PC-3 (cell line): ENCODE measurements at regions of chr11 and their contacts with region 1.

Region 1: GRCh38 chr11:87812571-87813365 is 362.5 kb downstream of the RAB38 start:
- DNase-seq: no peak
- ATAC-seq: no peak
- H3K4me3 ChIP-seq: no peak overlapping the region
- H3K27ac ChIP-seq: no peak overlapping the region
- H3K4me1 ChIP-seq: 0 out of 2 replicates have a peak, but pooled peaks cover 3% of the 10 kb centered on the region
- H3K27me3 ChIP-seq: no peaks in the 10 kb centered on the region
- CTCF ChIP-seq: no peak

Region 2: GRCh38 chr11:87560352-87560751 is 252.4 kb before region 1 on chr11:
- CTCF ChIA-PET with region 1: no interaction called
- POLR2A ChIA-PET with region 1: no interaction called
- intact Hi-C with region 1: no loop called
- DNase-seq: no peak
- ATAC-seq: no peak
- H3K4me3 ChIP-seq: no peak overlapping the region
- H3K27ac ChIP-seq: no peak overlapping the region
- H3K4me1 ChIP-seq: no peaks in the 10 kb centered on the region
- H3K27me3 ChIP-seq: no peaks in the 10 kb centered on the region
- CTCF ChIP-seq: no peak

Region 3: DNA sequence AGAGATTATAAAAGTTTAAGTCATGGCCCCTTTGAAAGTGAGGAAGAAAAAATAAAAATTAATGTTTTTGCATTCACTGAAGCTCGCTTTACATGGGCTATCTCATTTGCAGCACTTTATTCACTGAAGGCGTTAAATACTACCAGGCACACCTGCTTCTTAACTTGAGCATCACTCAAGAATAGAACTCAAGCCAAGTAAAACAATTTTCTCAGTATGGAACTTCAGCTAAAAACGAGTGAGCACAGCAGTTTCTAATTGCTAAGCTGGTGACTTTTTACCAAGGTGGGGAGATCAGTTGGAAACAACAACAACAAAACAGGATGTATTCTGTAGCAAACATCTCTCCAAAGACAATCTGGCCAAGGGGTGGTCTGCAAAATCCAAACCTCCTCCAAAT is 43.1 kb before region 1 on chr11:
- CTCF ChIA-PET with region 1: no interaction called
- POLR2A ChIA-PET with region 1: no interaction called
- intact Hi-C with region 1: loop called (anchors 2 kb)
- DNase-seq: no peak
- ATAC-seq: no peak
- H3K4me3 ChIP-seq: no peak overlapping the region
- H3K27ac ChIP-seq: no peak overlapping the region
- H3K4me1 ChIP-seq: peaks cover 3% of the 10 kb centered on the region
- H3K27me3 ChIP-seq: no peaks in the 10 kb centered on the region; the same call in 1 of the 2 replicates
- CTCF ChIP-seq: no peak